ENCODE measurements at regions of chr7 and their contacts with region 1.

Region 1: GRCh38 chr7:27160546-27161213 is 4.2 kb upstream of the HOXA7 start:
- DNase-seq: peak; percentile 86 to 96 (median 93)
- H3K4me3 ChIP-seq: peak overlapping the region in 3 of 4 donors; percentile 2 to 75 (median 52)
- H3K27ac ChIP-seq: peak overlapping the region in 4 of 5 donors; percentile 52 to 88 (median 74)
- H3K4me1 ChIP-seq: peaks cover 5 to 25% of the 10 kb centered on the region in 2 donors
- H3K27me3 ChIP-seq: peaks cover 12% of the 10 kb centered on the region
- CTCF ChIP-seq: peak; percentile 98 to 100 (median 99)
- POLR2A ChIP-seq: peak in 1 of 2 donors; percentile 58

Region 2: DNA sequence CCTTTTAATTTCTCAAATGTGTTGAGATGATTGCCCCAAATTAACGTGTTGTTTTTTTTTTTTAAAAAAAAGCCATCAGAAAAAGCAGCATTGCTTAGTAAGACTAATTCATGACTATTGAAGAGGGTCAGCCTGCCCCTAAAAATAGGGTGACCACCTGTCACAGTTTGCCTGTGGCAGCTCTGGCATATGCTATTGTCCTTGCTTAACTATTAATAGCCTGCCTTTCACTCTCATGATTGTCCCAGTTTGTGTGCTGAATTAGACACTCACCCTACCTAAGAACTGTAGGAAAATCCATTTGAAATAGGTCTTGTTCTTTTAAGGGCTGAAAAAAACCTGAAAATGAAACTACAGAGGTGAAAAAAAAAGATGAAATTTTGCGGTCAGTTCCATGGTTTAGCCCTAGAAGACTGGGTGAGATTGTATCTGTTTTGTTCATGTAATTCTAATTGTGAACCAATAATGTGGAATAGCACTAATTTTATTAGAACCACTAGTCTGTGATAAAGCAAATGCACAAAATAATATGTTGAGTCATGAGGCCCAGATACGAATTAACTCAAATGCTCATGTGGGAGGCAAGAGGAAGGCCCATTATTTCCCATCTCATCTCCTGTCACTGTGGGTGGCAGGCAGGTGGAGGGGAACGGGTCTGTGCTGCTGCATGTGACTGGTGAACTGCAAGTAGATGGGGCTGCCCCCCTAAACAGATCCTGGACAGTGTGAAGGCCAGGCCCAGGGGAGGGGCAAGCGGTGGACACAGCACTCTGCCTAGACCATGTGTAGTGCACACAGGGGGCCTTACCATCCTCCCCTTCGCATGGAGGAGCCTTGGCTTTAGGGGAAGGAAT is 1274.1 kb before region 1 on chr7:
- intact Hi-C with region 1: loop called in 1 of 2 experiments (anchors 10 kb)
- DNase-seq: no peak
- H3K4me3 ChIP-seq: no peak overlapping the region
- H3K27ac ChIP-seq: no peak overlapping the region
- H3K4me1 ChIP-seq: no peaks in the 10 kb centered on the region
- H3K27me3 ChIP-seq: no peaks in the 10 kb centered on the region
- CTCF ChIP-seq: no peak
- POLR2A ChIP-seq: no peak

Region 3: GRCh38 chr7:26078437-26079336 is 1082.0 kb before region 1 on chr7:
- intact Hi-C with region 1: loop called in 1 of 2 experiments (anchors 10 kb)
- DNase-seq: peak; percentile 46 to 79 (median 60)
- H3K4me3 ChIP-seq: peak overlapping the region in 1 of 4 donors; percentile 26
- H3K27ac ChIP-seq: no peak overlapping the region
- H3K4me1 ChIP-seq: no peaks in the 10 kb centered on the region
- H3K27me3 ChIP-seq: peaks cover 44% of the 10 kb centered on the region
- CTCF ChIP-seq: peak in 5 of 6 experiments; percentile 22 to 36 (median 32)
- POLR2A ChIP-seq: no peak

Region 4: DNA sequence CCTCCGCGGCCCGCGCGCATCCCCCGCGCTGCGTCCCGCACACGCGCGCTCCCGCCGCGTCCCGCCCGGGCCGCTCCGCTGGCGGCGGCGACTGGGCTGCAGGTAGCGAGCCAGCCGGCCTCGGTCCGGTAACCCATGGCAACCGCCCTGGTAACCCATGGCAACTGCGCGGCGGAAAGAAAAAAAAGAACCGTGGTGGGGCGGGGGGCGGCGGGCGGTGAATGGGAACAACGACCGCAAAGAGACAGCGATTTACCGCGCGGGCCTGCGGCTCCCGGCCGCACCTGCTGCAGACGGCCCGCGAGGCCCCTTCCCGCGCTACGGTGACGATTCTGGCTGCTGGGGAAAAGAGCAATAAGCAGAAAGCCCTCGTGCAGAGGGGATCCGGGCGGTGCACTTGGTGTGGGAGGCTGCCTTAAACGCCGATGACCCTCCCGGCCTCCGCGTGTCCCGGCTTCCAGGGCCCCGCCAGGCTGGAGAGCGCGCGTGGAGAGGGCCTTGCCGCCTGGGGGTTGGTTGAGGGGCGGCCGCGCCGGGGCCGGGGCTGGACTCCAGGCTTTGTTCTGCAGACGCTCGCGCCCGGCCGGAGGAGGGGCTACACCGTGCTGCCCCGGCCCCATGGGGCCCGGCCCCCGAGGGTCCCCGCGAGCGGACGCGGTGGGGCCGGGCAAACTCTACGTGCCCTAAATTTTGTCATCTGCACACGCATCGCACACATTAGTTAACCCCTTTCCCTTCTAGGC is 784.3 kb before region 1 on chr7:
- intact Hi-C with region 1: loop called in 1 of 2 experiments (anchors 10 kb)
- DNase-seq: peak; percentile 38 to 83 (median 65)
- H3K4me3 ChIP-seq: peak overlapping the region in 3 of 4 donors; percentile 50 to 64 (median 50)
- H3K27ac ChIP-seq: peak overlapping the region in 4 of 5 donors; percentile 49 to 76 (median 67)
- H3K4me1 ChIP-seq: peaks cover 0 to 8% of the 10 kb centered on the region in 2 donors
- H3K27me3 ChIP-seq: peaks cover 3% of the 10 kb centered on the region
- CTCF ChIP-seq: peak in 1 of 6 experiments; percentile 0
- POLR2A ChIP-seq: peak in 1 of 2 donors; percentile 24

Region 5: DNA sequence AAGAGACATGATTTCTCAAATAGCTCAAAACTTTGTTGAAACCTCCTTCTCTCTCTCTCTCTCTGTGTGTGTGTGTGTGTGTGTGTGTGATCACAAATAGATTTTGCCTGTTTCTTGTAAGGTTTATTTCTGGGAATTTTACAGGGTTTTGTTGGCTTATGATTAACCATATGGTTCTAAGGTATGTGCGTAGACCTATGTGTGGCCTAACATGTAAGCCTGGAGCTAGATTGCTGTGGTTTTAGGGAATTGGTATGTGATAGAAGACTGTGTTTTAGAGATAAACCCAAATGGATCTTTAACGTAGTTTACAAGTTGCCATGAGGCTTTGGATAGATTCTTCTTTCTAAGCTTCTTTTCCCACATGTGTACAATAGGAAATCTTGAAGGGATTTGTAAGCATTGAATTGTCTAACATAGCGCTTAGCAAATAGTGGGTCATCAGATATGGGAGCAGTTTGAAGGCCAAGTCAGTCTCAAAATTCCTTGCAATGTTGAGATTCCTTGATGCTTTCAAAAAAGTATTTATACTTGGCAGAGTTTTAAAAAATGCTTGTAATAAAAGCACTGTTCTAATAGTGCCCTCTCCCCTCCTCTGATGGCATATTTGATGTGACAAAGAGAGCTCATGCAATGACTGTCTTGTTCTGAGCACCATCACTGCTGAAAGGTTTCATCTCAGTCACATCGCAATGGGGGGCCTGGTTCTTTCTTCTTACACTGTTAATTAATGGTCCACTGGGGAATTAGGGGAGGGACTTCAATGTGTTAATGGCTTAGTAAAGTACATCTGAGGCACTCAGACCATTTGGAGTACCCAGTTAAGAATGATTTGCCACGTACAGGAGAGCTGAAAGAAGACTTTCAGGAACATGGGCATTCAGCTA is 750.8 kb before region 1 on chr7:
- intact Hi-C with region 1: no loop called
- DNase-seq: no peak
- H3K4me3 ChIP-seq: no peak overlapping the region
- H3K27ac ChIP-seq: no peak overlapping the region
- H3K4me1 ChIP-seq: no peaks in the 10 kb centered on the region
- H3K27me3 ChIP-seq: no peaks in the 10 kb centered on the region
- CTCF ChIP-seq: no peak
- POLR2A ChIP-seq: no peak

Region 6: GRCh38 chr7:27220440-27220955 is 59.8 kb after region 1 on chr7:
- intact Hi-C with region 1: no loop called
- DNase-seq: peak in 1 of 7 donors; percentile 10
- H3K4me3 ChIP-seq: no peak overlapping the region
- H3K27ac ChIP-seq: no peak overlapping the region
- H3K4me1 ChIP-seq: no peaks in the 10 kb centered on the region
- H3K27me3 ChIP-seq: peaks cover 69% of the 10 kb centered on the region
- CTCF ChIP-seq: no peak
- POLR2A ChIP-seq: no peak

Measured in adrenal gland (tissue), 19 donors.